Breast epithelium (tissue), 4 donors: ENCODE measurements at regions of chr21 and their contacts with region 1.

Region 1: GRCh38 chr21:16821588-16821987 is 691.3 kb upstream of the CXADR start:
- DNase-seq: no peak
- H3K4me3 ChIP-seq: no peak overlapping the region
- H3K27ac ChIP-seq: no peak overlapping the region
- H3K4me1 ChIP-seq: no peaks in the 10 kb centered on the region
- H3K27me3 ChIP-seq: no peaks in the 10 kb centered on the region
- CTCF ChIP-seq: no peak
- POLR2A ChIP-seq: no peak

Region 2: DNA sequence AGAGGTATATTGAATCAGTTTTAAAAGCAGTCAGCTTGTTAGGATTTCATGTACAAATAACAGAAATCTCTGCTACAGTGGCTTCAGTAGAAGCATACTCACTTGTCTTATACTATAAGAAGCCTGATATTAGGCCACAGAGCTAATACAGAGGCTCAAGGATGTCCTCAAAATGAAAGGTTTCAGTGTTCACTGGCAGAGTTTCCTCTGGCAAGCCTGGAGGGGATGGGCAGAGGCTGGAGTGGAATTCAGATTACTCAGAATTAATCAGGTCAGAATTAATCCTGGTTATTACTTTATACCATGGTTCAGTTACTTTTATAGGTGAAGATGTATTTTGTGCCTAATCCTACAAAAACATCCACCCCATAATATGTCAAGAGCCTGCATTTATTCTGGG is 571.3 kb before region 1 on chr21:
- intact Hi-C with region 1: loop called (anchors 5 kb)
- DNase-seq: no peak
- H3K4me3 ChIP-seq: no peak overlapping the region
- H3K27ac ChIP-seq: no peak overlapping the region
- H3K4me1 ChIP-seq: no peaks in the 10 kb centered on the region
- H3K27me3 ChIP-seq: no peaks in the 10 kb centered on the region
- CTCF ChIP-seq: no peak
- POLR2A ChIP-seq: no peak

Region 3: GRCh38 chr21:16377120-16377658 is 444.4 kb before region 1 on chr21:
- intact Hi-C with region 1: no loop called
- DNase-seq: no peak
- H3K4me3 ChIP-seq: no peak overlapping the region
- H3K27ac ChIP-seq: peak overlapping the region; percentile 4 to 37
- H3K4me1 ChIP-seq: no peaks in the 10 kb centered on the region
- H3K27me3 ChIP-seq: no peaks in the 10 kb centered on the region
- CTCF ChIP-seq: no peak
- POLR2A ChIP-seq: no peak

Region 4: DNA sequence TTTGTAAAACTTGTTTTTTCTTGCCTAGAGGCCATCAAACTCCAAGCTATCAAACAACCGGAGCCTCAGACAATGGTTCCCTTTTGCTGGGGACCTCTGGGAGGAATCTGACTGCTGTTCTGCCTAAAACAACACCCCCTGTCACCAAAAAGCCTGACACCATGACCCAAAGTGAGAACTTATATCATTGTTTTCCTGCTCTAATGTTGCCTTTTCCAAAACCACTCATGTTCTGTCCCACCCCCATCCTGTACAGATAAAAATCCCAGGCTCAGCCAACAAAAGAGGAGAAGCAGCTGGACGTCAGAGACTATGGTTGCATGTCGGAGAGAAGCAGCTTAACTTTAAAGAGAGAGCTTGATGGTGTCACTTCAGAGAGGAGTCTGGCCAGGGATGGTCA is 364.1 kb after region 1 on chr21:
- intact Hi-C with region 1: no loop called
- DNase-seq: no peak
- H3K4me3 ChIP-seq: no peak overlapping the region
- H3K27ac ChIP-seq: no peak overlapping the region
- H3K4me1 ChIP-seq: no peaks in the 10 kb centered on the region
- H3K27me3 ChIP-seq: no peaks in the 10 kb centered on the region
- CTCF ChIP-seq: no peak
- POLR2A ChIP-seq: no peak